Heart right ventricle (tissue), 16 donors: ENCODE measurements at regions of chr20 and their contacts with region 1.

Region 1: GRCh38 chr20:19317237-19318069 is 105.0 kb downstream of the SLC24A3 start:
- DNase-seq: peak in 1 of 2 donors; percentile 9
- ATAC-seq: peak in 1 of 8 donors; percentile 34
- H3K4me3 ChIP-seq: no peak overlapping the region
- H3K27ac ChIP-seq: no peak overlapping the region
- H3K4me1 ChIP-seq: peaks cover 0 to 13% (median 0%) of the 10 kb centered on the region in 9 donors
- H3K27me3 ChIP-seq: peaks cover 0 to 4% (median 0%) of the 10 kb centered on the region in 7 donors
- CTCF ChIP-seq: no peak

Region 2: DNA sequence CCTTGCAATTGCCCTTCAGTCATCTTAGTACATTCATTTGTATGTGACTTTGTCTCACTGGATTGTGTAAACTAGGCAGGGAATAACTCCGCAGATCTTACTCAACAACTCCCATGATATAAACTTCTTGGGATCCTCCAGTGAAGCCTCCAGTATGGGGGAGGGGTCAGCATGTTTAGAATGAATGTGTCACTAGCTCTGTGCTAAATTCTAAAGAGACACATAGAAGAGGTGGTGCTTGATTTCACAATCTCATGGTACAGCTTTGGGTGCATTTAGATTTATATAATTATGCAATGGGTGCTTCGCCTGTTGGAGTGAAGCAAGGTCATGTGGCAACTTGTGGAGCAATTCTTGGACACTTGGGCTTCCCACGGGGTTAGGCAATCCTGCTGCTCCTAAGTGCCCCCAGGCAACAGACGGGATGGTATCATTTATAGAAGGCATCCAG is 64.8 kb before region 1 on chr20:
- intact Hi-C with region 1: loop called in 1 of 10 experiments (anchors 10 kb)
- DNase-seq: no peak
- ATAC-seq: peak in 2 of 8 donors; percentile 50 to 70
- H3K4me3 ChIP-seq: no peak overlapping the region
- H3K27ac ChIP-seq: no peak overlapping the region
- H3K4me1 ChIP-seq: peaks cover 0 to 56% (median 0%) of the 10 kb centered on the region in 9 donors
- H3K27me3 ChIP-seq: peaks cover 0 to 6% (median 0%) of the 10 kb centered on the region in 7 donors
- CTCF ChIP-seq: no peak